ENCODE measurements at regions of chr5 and their contacts with region 1.

Region 1: DNA sequence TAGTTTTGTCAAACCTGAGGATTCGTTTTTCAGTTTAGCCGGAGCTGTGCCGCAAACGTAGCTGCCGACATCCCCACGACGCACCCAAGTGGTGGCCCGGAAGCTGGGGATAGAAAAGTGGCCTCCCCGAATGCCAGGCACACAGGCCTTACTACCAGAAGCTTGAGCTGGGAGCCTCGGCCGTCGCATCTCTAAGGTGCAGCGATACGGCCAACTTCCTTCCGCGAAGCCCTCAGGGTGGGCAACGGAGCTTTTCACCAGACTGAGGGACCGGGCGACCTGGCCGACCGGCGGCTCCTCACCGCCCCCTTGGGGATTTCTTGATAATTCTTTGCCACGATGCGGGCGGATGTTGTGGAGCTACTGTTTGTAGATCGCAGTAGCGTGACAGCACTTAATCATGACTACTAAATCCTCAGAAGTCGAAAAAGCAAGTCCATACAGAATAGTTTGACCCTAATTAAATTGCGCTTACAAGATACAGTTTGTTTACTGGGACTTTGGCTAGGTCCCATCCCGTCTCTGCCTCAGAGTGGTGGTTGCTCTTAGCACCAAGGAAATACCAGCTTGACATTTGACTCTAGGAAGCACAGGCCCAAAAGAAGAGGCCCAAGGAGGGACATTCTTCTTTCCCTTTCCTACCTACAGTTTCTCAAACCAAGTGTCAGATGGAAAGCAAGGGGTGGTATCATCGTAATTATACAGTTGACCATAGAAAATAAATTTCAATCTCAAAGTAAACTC is 613 bp upstream of the TMEM267 start:
- DNase-seq: peak; percentile 93

Region 2: DNA sequence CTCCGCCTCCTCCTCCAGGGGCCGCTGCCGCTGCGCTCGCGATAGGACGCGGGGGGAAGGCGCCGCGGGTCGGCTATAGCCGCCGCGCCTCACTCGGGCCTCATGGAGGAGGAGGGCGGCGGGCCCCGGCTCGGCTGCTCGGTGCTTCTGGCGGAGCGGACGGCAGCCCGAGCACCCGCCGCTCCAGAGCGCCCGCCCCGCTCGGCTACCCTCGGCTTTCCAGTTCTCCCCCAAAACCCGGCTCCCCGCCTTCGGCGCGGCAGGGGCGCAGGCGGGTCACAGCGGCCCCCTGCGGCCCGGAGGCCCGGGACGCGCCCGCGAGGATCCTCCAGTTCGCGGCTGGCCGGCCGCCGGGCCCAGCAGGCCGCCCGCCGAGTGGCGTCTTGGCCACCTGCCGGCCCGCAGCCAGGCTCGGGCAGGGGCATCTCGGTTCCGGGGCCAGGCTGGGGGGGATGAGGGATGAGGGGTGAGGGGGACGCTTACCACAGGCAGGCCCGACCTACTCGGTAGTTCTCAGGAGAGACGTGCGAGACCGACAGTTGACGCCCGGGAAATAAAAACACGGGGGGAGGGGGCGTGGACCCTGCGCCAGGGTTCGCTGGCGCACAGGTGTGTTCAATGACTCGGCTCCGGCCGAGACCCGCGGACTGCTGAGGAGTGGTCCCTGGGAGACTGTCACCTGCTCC is 72.7 kb after region 1 on chr5 and contains the start of gene PAIP1:
- in situ Hi-C with region 1: loop called (anchors 10 kb)
- DNase-seq: peak; percentile 92
- total RNA-seq, gene PAIP1: 348 and 356 TPM in 2 replicates

Region 3: GRCh38 chr5:43592363-43592762 is 108.1 kb after region 1 on chr5:
- in situ Hi-C with region 1: no loop called
- DNase-seq: no peak